Activated T-helper 1 cell treated with anti-CD3 and anti-CD28 coated beads, Interleukin-12 subunit alpha, Interleukin-12 subunit beta, Interleukin-2, Interleukin-4 antibody, amounts not matched to agents 30 ng/mL and 10 ng/mL and 1 ng/mL, durations not matched to agents 14 hours and 24 hours and 36 hours (primary cell): ENCODE measurements at regions of chr6 and their contacts with region 1.

Region 1: GRCh38 chr6:105646391-105646867 is 243.5 kb upstream of the PREP start:
- DNase-seq: peak; percentile 70
- H3K4me3 Mint-ChIP-seq: no peak overlapping the region
- H3K27ac Mint-ChIP-seq: peak overlapping the region; percentile 85
- H3K4me1 Mint-ChIP-seq: peaks cover 78% of the 10 kb centered on the region
- H3K27me3 Mint-ChIP-seq: peaks cover 4% of the 10 kb centered on the region

Region 2: DNA sequence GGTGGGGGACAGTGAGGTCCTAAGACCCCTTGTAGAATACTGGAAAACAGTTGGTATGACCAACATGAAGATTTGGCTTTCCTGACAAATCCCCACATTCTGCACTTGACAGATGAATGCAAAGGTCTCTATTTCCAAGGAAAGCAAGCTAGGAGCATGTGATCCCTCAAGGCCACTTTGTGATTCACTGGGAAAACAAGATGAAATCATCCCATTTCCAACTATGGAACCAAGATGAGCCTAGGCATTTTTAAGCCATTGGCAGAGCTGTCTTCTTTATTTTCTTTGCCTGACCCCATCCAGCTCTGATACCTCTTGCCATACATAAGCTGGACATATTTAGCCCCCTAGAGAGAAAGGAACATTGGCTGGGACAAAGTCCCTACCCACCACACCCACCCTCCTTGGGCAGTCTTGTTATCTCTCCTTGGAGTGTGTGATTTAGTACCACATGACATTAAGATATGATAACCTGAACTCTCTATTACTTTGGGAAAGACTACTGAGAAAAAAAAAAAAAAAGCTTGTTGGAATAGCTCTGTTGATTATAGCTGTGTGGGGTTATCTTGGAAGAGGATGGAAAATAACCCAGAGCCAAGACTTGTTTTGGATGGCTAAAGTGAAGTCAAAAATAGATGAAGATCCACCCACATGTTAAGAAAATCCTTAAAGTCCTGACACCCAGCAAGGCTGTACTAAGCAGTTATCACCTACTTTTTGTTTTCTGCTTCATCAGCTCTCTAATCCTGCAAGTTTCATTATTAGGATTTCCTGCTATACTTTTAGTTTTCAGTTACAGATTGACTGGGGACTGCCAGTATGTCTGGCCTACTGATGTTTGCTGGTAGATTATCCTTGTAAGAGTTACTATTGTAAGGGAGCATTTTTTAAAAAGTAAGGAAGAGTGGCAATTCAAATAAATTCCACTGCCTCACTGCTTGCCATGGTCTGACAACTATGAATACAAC is 153.4 kb before region 1 on chr6:
- intact Hi-C with region 1: loop called (anchors 1 kb)
- DNase-seq: no peak
- H3K4me3 Mint-ChIP-seq: peak overlapping the region; percentile 21
- H3K27ac Mint-ChIP-seq: peak overlapping the region; percentile 78
- H3K4me1 Mint-ChIP-seq: peaks cover 26% of the 10 kb centered on the region
- H3K27me3 Mint-ChIP-seq: no peaks in the 10 kb centered on the region

Region 3: DNA sequence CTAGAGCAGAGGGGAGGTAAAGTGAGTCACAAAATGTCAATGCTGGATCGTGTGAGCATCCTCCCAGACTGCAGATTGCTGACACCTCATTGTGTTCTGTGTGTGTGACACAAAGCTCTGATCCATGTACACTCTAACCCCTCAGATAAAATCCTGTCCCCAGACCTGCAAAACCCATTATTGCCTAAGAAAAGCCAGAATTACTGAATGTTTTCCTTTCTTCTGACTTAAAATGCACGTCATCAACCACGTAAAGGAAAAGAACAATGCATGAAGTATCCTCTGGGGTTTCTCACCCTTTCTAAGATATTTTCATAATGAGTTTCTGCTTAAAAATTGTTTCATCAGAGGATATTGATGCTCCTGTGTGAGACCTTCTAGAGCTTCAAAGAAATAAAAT is 25.6 kb before region 1 on chr6:
- intact Hi-C with region 1: loop called (anchors 1 kb)
- DNase-seq: peak; percentile 19
- H3K4me3 Mint-ChIP-seq: peak overlapping the region; percentile 46
- H3K27ac Mint-ChIP-seq: peak overlapping the region; percentile 91
- H3K4me1 Mint-ChIP-seq: peaks cover 46% of the 10 kb centered on the region
- H3K27me3 Mint-ChIP-seq: peaks cover 2% of the 10 kb centered on the region

Region 4: GRCh38 chr6:105748737-105749161 is 102.3 kb after region 1 on chr6:
- intact Hi-C with region 1: loop called (anchors 1 kb)
- DNase-seq: no peak
- H3K4me3 Mint-ChIP-seq: no peak overlapping the region
- H3K27ac Mint-ChIP-seq: no peak overlapping the region
- H3K4me1 Mint-ChIP-seq: peaks cover 57% of the 10 kb centered on the region
- H3K27me3 Mint-ChIP-seq: no peaks in the 10 kb centered on the region

Region 5: GRCh38 chr6:105873171-105873704 is 226.8 kb after region 1 on chr6:
- intact Hi-C with region 1: loop called (anchors 1 kb)
- DNase-seq: no peak
- H3K4me3 Mint-ChIP-seq: no peak overlapping the region
- H3K27ac Mint-ChIP-seq: no peak overlapping the region
- H3K4me1 Mint-ChIP-seq: peaks cover 15% of the 10 kb centered on the region
- H3K27me3 Mint-ChIP-seq: peaks cover 14% of the 10 kb centered on the region

Region 6: DNA sequence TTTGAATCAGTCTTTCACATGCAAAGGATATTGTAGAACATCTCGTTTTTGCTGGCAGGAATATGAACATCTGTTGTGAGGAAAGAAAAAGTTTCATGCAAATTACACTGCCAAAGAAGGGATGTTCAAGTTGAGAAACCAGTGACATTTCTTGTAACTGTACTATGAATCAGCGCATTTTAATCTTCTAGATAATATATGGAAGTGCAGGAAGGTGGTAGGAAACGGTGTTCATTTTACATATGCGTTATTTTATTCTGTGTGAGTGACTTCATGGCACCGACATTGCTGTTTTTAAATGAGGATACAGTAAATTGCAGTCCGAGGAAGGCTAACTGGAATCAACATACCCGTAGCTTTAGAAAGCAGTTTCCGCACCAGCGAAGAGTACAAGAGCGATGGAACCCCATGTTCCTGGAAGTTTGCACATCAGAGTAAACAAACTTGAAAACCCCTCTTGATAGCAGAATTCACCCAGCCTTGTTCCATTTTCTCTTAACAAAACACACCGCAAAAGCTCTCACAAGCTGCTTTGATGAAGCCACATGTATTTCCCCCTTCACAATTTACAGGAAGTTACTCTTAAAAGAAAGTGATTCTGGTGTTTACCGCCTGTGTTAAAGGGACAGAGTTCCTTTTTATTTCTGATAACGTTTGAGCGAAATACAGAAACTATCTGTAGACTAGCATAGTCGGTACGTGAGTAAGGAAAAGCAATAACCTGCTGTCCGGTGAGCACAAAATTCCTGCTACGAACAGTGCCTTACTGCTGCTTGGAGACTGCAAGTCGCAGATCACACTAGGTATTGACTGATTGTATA is 451.2 kb after region 1 on chr6:
- intact Hi-C with region 1: loop called (anchors 1 kb)
- DNase-seq: peak; percentile 72
- H3K4me3 Mint-ChIP-seq: peak overlapping the region; percentile 89
- H3K27ac Mint-ChIP-seq: peak overlapping the region; percentile 96
- H3K4me1 Mint-ChIP-seq: peaks cover 91% of the 10 kb centered on the region
- H3K27me3 Mint-ChIP-seq: no peaks in the 10 kb centered on the region

Region 7: GRCh38 chr6:106325336-106326178 is 679.1 kb after region 1 on chr6 and contains the start of gene ATG5:
- intact Hi-C with region 1: loop called (anchors 1 kb)
- DNase-seq: peak; percentile 100
- H3K4me3 Mint-ChIP-seq: peak within 1 kb of the TSS; percentile 100
- H3K27ac Mint-ChIP-seq: peak within 1 kb of the TSS; percentile 98
- H3K4me1 Mint-ChIP-seq: peaks cover 35% of the 10 kb centered on the region
- H3K27me3 Mint-ChIP-seq: peaks cover 22% of the 10 kb centered on the region
- total RNA-seq, gene ATG5: 36.0 and 36.7 TPM in 2 replicates